A549 (cell line): ENCODE measurements at regions of chr2 and their contacts with region 1.

Region 1: GRCh38 chr2:72887754-72888437 is 688 bp downstream of the SPR start:
- DNase-seq: peak; percentile 85 to 93
- ATAC-seq: peak; percentile 70 to 79
- H3K4me3 ChIP-seq: peak overlapping the region; percentile 77
- H3K27ac ChIP-seq: peak overlapping the region; percentile 92 to 96
- H3K4me1 ChIP-seq: peaks cover 22% of the 10 kb centered on the region
- CTCF ChIP-seq: peak; percentile 96
- EP300 ChIP-seq: no peak
- POLR2A ChIP-seq: peak; percentile 38; the same call in 1 of the 2 replicates
- RAD21 ChIP-seq: peak; percentile 56 to 75

Region 2: GRCh38 chr2:72862239-72862988 is 25.5 kb before region 1 on chr2:
- CTCF ChIA-PET with region 1: interaction called, 60 read pairs
- POLR2A ChIA-PET with region 1: interaction called, 3 read pairs
- DNase-seq: peak; percentile 93 to 97
- ATAC-seq: peak; percentile 97 to 99
- H3K4me3 ChIP-seq: peak overlapping the region; percentile 41
- H3K27ac ChIP-seq: peak overlapping the region; percentile 12 to 58; a peak in 2 of 6 replicates
- H3K4me1 ChIP-seq: peaks cover 10% of the 10 kb centered on the region; the same call in 2 of the 3 replicates
- CTCF ChIP-seq: peak; percentile 99
- EP300 ChIP-seq: no peak
- POLR2A ChIP-seq: no peak
- RAD21 ChIP-seq: peak; percentile 88

Region 3: GRCh38 chr2:72924353-72925240 is 36.7 kb after region 1 on chr2:
- CTCF ChIA-PET with region 1: interaction called, 211 read pairs
- POLR2A ChIA-PET with region 1: no interaction called
- DNase-seq: no peak
- ATAC-seq: peak; percentile 6 to 36; a peak in 3 of 6 replicates
- H3K4me3 ChIP-seq: no peak overlapping the region
- H3K27ac ChIP-seq: no peak overlapping the region
- H3K4me1 ChIP-seq: peaks cover 5% of the 10 kb centered on the region; the same call in 1 of the 3 replicates
- CTCF ChIP-seq: no peak
- EP300 ChIP-seq: no peak
- POLR2A ChIP-seq: no peak
- RAD21 ChIP-seq: no peak

Region 4: GRCh38 chr2:72963423-72964145 is 75.7 kb after region 1 on chr2:
- CTCF ChIA-PET with region 1: interaction called, 208 read pairs
- POLR2A ChIA-PET with region 1: no interaction called
- DNase-seq: no peak
- ATAC-seq: peak in 1 of 2 experiments; percentile 19; a peak in 3 of 6 replicates
- H3K4me3 ChIP-seq: no peak overlapping the region
- H3K27ac ChIP-seq: no peak overlapping the region
- H3K4me1 ChIP-seq: no peaks in the 10 kb centered on the region
- CTCF ChIP-seq: no peak
- EP300 ChIP-seq: no peak
- POLR2A ChIP-seq: no peak
- RAD21 ChIP-seq: no peak

Region 5: DNA sequence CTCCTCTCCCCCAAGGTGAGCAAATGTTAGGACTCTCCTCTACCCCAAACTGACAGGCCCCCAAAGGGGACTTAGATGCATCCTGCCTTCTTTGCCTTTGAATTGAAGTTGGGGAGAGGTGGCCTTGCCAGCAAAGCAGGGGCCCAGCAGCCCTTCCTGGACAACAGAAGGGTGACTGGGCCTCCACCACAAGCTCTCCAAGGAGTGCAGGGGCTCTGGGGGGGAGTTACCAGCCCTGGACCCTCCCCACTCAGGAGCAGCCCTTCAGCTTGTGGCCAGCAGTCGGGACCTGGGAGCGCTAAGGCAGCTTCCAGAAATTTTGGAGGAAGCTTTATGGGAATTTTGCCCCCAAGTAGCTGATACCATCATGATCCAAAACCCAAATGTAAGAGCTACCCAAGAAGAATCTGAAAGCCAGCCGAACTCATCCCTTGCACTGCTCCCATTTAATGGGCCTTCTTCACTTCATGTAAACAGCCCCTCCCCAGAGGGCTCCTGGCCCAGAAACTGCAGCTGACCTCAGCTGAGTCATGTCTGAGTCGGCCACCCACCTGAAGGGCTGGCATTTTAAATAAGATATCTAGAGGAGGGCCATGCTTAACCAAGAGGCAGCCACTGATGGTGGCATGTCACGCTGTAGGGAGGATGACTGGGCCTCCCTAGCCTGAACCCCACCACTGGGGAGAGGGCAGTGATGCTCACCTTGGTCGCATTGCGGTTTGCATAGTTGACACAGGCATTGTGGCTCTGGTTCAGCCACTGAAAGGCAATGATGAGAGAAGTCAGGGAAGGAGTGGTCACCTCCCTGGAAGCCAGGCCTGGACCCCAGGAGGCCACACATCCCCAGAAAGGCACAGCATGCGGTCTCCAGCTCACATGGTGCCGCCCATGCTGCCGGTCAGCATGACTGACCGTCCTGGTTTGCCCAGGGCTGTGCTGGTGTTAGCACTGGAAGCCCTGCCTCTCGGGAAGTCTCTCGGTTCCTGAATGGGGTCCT is 112.1 kb after region 1 on chr2:
- CTCF ChIA-PET with region 1: interaction called, 19 read pairs
- POLR2A ChIA-PET with region 1: no interaction called
- DNase-seq: no peak
- ATAC-seq: peak in 1 of 2 experiments; percentile 28; a peak in 1 of 6 replicates
- H3K4me3 ChIP-seq: no peak overlapping the region
- H3K27ac ChIP-seq: peak overlapping the region in 1 of 2 experiments; percentile 47; a peak in 2 of 6 replicates
- H3K4me1 ChIP-seq: peaks cover 18% of the 10 kb centered on the region
- CTCF ChIP-seq: no peak
- EP300 ChIP-seq: no peak
- POLR2A ChIP-seq: no peak
- RAD21 ChIP-seq: no peak

Region 6: GRCh38 chr2:73112913-73113633 is 225.2 kb after region 1 on chr2 and contains the start of gene RAB11FIP5:
- CTCF ChIA-PET with region 1: interaction called, 11 read pairs
- POLR2A ChIA-PET with region 1: no interaction called
- DNase-seq: peak; percentile 67 to 81
- ATAC-seq: peak; percentile 77 to 88
- H3K4me3 ChIP-seq: peak within 1 kb of the TSS; percentile 91
- H3K27ac ChIP-seq: peak within 1 kb of the TSS; percentile 86 to 92
- H3K4me1 ChIP-seq: peaks cover 20% of the 10 kb centered on the region
- CTCF ChIP-seq: no peak
- EP300 ChIP-seq: no peak
- POLR2A ChIP-seq: peak; percentile 23; the same call in 1 of the 2 replicates
- RAD21 ChIP-seq: no peak; a peak in 1 of 5 replicates
- polyA plus RNA-seq, gene RAB11FIP5: 21.6 and 30.8 TPM in 2 replicates

Region 7: GRCh38 chr2:73218298-73218697 is 330.4 kb after region 1 on chr2:
- CTCF ChIA-PET with region 1: interaction called, 86 read pairs
- POLR2A ChIA-PET with region 1: no interaction called
- DNase-seq: no peak
- ATAC-seq: no peak
- H3K4me3 ChIP-seq: no peak overlapping the region
- H3K27ac ChIP-seq: no peak overlapping the region
- H3K4me1 ChIP-seq: peaks cover 9% of the 10 kb centered on the region
- CTCF ChIP-seq: no peak
- EP300 ChIP-seq: no peak
- POLR2A ChIP-seq: no peak
- RAD21 ChIP-seq: no peak